ENCODE measurements at regions of chr20 and their contacts with region 1.

Region 1: DNA sequence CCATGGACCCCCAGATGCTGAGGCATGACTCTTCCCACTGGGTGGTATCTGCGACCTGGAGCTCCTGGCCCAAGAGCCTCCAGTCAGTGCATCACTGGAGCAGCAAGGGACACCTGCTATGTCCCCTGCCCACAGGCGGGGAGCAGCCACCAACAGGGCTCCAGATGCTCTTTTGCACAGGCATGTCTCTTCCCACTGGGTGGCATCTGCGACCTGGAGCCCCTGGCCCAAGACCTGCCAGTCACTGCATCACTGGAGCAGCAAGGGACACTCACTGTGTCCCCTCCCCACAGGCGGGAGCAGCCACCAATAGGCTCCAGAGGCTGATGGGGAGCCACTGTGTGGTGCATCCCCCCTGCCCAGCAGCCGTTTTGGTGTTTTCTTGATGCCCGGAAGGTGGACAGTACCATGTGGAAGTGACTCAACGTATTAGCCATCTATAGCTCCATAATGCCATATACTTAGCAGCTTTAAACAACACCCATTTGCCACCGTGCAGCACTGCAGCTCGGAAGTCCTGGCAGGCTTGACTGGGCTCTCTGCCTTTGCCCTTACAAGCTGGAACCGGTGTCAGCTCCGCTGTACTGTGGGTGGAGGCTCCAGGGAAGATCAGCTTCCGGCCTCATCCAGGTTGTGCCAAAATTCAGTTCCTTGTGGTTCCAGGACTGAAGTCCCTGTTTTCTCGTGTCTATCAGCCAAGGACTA is 124.9 kb upstream of the CST7 start:
- DNase-seq: no peak
- CTCF ChIP-seq: no peak

Region 2: GRCh38 chr20:24746351-24746685 is 77.8 kb before region 1 on chr20:
- in situ Hi-C with region 1: no loop called
- DNase-seq: no peak
- CTCF ChIP-seq: no peak

Region 3: GRCh38 chr20:24917797-24918578 is 93.8 kb after region 1 on chr20:
- in situ Hi-C with region 1: loop called (anchors 10 kb)
- DNase-seq: peak; percentile 79
- CTCF ChIP-seq: peak; percentile 96

Measured in GM13977 (cell line).